ENCODE measurements at regions of chr15 and their contacts with region 1.

Region 1: DNA sequence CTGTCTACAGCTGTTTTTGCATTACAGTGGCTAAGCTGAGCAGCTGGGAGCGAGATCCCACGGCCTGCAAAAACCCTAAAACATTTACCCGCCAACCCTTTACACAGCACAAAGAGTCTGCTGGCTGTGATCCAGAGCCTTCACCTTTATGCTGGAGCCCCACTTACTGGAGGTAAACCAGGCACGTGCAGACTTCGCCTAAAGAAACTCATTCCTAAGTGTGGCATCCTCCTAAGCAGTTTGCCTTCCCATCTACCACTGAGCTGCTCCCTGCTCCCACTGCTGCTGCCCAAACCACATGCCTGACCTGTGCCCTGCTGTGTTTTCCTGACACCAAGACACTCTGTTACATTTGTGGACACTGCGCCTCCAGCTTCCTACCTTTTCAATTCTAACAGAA is 53.0 kb downstream of the CHSY1 start:
- DNase-seq: no peak
- ATAC-seq: no peak
- H3K4me3 ChIP-seq: no peak overlapping the region
- H3K4me3 Mint-ChIP-seq: no peak overlapping the region
- H3K27ac ChIP-seq: no peak overlapping the region
- H3K27ac Mint-ChIP-seq: peak overlapping the region; percentile 14
- H3K4me1 ChIP-seq: peaks cover 51% of the 10 kb centered on the region
- H3K4me1 Mint-ChIP-seq: peaks cover 83% of the 10 kb centered on the region
- H3K27me3 ChIP-seq: no peaks in the 10 kb centered on the region
- H3K27me3 Mint-ChIP-seq: no peaks in the 10 kb centered on the region
- CTCF ChIP-seq: no peak

Region 2: GRCh38 chr15:101167753-101168463 is 30.9 kb before region 1 on chr15:
- CTCF ChIA-PET with region 1: no interaction called
- POLR2A ChIA-PET with region 1: no interaction called
- intact Hi-C with region 1: loop called in 1 of 2 experiments (anchors 1 kb)
- DNase-seq: peak in 8 of 9 experiments; percentile 38 to 72 (median 58)
- ATAC-seq: peak; percentile 95
- H3K4me3 ChIP-seq: no peak overlapping the region
- H3K4me3 Mint-ChIP-seq: peak overlapping the region; percentile 47
- H3K27ac ChIP-seq: no peak overlapping the region
- H3K27ac Mint-ChIP-seq: peak overlapping the region; percentile 49
- H3K4me1 ChIP-seq: peaks cover 16% of the 10 kb centered on the region
- H3K4me1 Mint-ChIP-seq: peaks cover 17% of the 10 kb centered on the region
- H3K27me3 ChIP-seq: no peaks in the 10 kb centered on the region
- H3K27me3 Mint-ChIP-seq: no peaks in the 10 kb centered on the region
- CTCF ChIP-seq: no peak

Measured in CD8-positive, alpha-beta T cell (primary cell).